ENCODE measurements at regions of chr5 and their contacts with region 1.

Region 1: GRCh38 chr5:141618804-141619554 is at the start of gene DIAPH1:
- DNase-seq: peak; percentile 79 to 98 (median 90)

Region 2: DNA sequence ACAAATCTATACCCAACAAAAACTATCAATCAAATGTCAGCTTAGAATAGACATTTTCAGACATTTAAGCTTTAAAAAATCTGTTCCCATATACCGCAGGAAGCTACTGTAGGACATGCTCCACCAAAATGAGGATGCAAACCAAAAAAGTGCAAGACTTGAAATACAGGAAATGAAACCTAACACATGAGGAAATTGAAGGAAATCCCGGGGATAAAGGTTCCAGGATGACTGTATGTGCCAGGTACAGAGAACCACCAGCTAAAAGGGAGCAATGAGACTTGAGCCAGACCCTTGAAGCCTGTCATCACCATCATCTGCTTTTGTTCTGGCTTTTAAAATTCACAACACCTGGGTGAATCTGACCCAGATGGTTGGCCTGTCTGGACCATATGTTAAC is 21.6 kb before region 1 on chr5:
- intact Hi-C with region 1: loop called (anchors 1 kb)
- DNase-seq: no peak

Region 3: GRCh38 chr5:141636413-141637122 is 17.6 kb after region 1 on chr5 and contains the starts of genes HDAC3 and RELL2:
- intact Hi-C with region 1: loop called (anchors 2 kb)
- DNase-seq: peak; percentile 91 to 99 (median 96)

Region 4: DNA sequence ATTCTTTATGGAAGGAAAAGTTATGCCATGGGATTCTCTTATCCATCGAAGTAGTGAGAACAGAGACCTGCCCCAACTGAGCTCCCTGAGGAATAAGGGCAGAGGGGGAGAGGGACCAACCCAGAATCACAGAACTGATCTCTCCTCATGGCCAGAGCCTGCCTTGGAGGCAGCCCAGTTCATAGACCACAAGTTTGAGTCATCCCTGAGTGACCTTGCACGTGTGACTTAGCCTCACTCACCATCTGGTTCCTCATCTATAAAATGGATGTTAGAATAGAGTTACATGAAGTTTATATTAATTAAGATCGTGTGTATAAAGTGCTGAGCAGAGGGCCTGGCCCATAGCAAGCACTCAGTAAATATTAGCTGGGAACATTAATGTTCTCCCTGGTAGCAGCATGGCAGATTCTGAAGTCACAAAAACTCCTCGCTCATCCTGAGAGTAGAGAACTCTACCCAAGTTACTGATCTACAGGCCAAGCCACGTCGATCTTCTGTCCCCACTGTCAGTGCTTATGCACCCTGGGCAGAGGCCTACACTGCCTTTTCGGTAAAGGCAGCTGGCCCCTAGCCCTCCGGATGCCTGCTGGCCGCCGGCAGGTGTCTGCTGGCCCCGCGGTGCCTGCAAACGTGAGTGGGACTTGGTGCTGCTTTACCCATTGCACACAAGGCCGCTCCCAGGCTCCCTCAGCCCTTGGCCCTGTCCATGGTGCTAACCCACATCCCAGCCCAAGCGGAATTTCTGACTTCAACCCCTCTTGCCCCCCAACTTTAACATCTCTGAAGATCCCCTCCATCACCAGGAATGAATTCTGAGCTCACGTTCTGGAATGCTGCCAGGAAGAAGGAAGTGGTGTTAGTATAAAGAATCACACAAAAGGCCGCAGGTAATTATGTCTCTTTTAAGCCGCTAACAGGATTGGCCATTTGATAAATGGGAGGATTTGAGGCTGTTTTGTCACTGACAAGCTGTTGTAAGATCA is 124.2 kb after region 1 on chr5:
- intact Hi-C with region 1: no loop called
- DNase-seq: peak in 1 of 10 donors; percentile 82

Measured in posterior cingulate gyrus (tissue), 11 donors.